CD8-positive, alpha-beta memory T cell (primary cell): ENCODE measurements at regions of chr12 and their contacts with region 1.

Region 1: GRCh38 chr12:127108360-127109215 is 1158.4 kb upstream of the TMEM132C start:
- DNase-seq: peak in 3 of 5 donors; percentile 15 to 58 (median 16)
- H3K4me3 ChIP-seq: no peak overlapping the region
- H3K4me3 Mint-ChIP-seq: no peak overlapping the region
- H3K27ac ChIP-seq: no peak overlapping the region
- H3K27ac Mint-ChIP-seq: no peak overlapping the region
- H3K4me1 ChIP-seq: no peaks in the 10 kb centered on the region
- H3K4me1 Mint-ChIP-seq: no peaks in the 10 kb centered on the region
- H3K27me3 ChIP-seq: no peaks in the 10 kb centered on the region
- H3K27me3 Mint-ChIP-seq: peaks cover 3 to 62% of the 10 kb centered on the region in 2 donors

Region 2: GRCh38 chr12:127133675-127134335 is 25.2 kb after region 1 on chr12:
- CTCF ChIA-PET with region 1: no interaction called
- POLR2A ChIA-PET with region 1: no interaction called
- DNase-seq: no peak
- H3K4me3 ChIP-seq: no peak overlapping the region
- H3K4me3 Mint-ChIP-seq: no peak overlapping the region
- H3K27ac ChIP-seq: no peak overlapping the region
- H3K27ac Mint-ChIP-seq: no peak overlapping the region
- H3K4me1 ChIP-seq: no peaks in the 10 kb centered on the region
- H3K4me1 Mint-ChIP-seq: no peaks in the 10 kb centered on the region
- H3K27me3 ChIP-seq: no peaks in the 10 kb centered on the region
- H3K27me3 Mint-ChIP-seq: peaks cover 8 to 15% of the 10 kb centered on the region in 2 donors

Region 3: DNA sequence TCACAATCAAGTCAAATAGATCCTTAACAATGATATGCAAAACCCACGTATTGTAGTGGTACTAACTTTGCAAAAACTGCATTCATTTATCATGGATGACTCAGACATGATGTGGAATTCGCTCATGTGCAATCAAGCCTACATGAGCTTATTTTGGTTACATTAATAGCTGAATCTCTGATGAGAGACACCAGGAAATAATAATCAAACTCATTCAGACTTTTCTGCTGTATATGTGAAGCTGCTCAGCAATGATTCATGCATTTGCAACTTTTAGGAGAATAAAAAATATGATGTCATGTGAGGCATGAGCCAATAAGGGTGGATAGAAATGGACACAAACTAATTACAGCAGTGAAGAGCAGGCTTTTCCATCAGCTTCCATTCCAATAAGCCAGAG is 82.5 kb after region 1 on chr12:
- CTCF ChIA-PET with region 1: no interaction called
- POLR2A ChIA-PET with region 1: no interaction called
- DNase-seq: no peak
- H3K4me3 ChIP-seq: no peak overlapping the region
- H3K4me3 Mint-ChIP-seq: no peak overlapping the region
- H3K27ac ChIP-seq: no peak overlapping the region
- H3K27ac Mint-ChIP-seq: no peak overlapping the region
- H3K4me1 ChIP-seq: no peaks in the 10 kb centered on the region
- H3K4me1 Mint-ChIP-seq: no peaks in the 10 kb centered on the region
- H3K27me3 ChIP-seq: no peaks in the 10 kb centered on the region
- H3K27me3 Mint-ChIP-seq: peaks cover 12 to 14% of the 10 kb centered on the region in 2 donors

Region 4: DNA sequence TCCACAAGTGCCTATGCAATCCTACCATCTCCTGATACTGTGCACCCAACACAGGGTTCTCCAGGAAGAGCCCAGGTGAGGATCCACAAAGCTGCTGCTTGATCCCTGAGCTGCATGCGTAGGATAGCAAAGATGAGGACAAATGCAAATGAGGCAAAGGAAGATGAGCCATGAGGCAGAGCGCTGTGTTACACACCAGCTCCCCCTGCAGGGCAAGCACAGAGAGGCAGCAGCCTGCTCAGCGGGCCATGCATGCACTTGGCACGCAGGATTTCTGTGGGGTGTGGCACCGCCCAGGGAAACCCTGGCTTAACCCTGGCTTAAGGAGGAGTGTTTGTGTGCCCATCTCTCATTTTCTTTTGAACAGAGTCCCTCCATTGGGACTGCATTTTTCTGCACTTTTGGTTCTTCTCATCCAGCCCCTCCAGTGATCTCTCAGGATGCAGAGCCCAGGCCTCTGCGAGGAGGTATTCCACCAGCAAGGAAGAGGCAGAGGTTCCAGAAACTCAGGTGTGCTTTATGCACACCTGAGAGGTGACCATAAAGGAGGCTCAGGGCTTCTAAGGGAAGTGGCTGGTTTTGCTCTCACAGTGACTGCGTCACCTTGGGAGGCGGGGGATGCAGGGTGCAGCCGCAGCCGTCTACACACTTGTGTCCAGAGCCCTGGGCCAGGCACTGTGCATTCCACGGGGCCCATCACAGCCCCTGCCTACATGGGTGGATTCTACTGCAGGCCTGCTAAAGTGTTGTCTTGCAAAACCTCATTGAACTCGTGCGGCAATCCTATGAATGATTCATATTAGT is 185.1 kb after region 1 on chr12:
- CTCF ChIA-PET with region 1: interaction called, 25 read pairs
- POLR2A ChIA-PET with region 1: no interaction called
- DNase-seq: peak in 3 of 5 donors; percentile 8 to 60 (median 10)
- H3K4me3 ChIP-seq: no peak overlapping the region
- H3K4me3 Mint-ChIP-seq: no peak overlapping the region
- H3K27ac ChIP-seq: no peak overlapping the region
- H3K27ac Mint-ChIP-seq: no peak overlapping the region
- H3K4me1 ChIP-seq: no peaks in the 10 kb centered on the region
- H3K4me1 Mint-ChIP-seq: no peaks in the 10 kb centered on the region
- H3K27me3 ChIP-seq: no peaks in the 10 kb centered on the region
- H3K27me3 Mint-ChIP-seq: peaks cover 0 to 6% of the 10 kb centered on the region in 2 donors

Region 5: GRCh38 chr12:127381048-127381668 is 272.6 kb after region 1 on chr12:
- CTCF ChIA-PET with region 1: interaction called, 19 read pairs
- POLR2A ChIA-PET with region 1: no interaction called
- DNase-seq: peak in 1 of 5 donors; percentile 2
- H3K4me3 ChIP-seq: no peak overlapping the region
- H3K4me3 Mint-ChIP-seq: no peak overlapping the region
- H3K27ac ChIP-seq: no peak overlapping the region
- H3K27ac Mint-ChIP-seq: peak overlapping the region in 1 of 8 donors; percentile 34
- H3K4me1 ChIP-seq: no peaks in the 10 kb centered on the region
- H3K4me1 Mint-ChIP-seq: peaks cover 0 to 4% (median 0%) of the 10 kb centered on the region in 3 donors
- H3K27me3 ChIP-seq: no peaks in the 10 kb centered on the region
- H3K27me3 Mint-ChIP-seq: no peaks in the 10 kb centered on the region